H1 (cell line): ENCODE measurements at regions of chr15 and their contacts with region 1.

Region 1: GRCh38 chr15:75842722-75843551 is at the start of gene UBE2Q2:
- DNase-seq: peak in 1 of 2 experiments; percentile 89
- H3K4me3 ChIP-seq: peak within 1 kb of the TSS; percentile 75 to 95 (median 83)
- H3K27ac ChIP-seq: peak within 1 kb of the TSS; percentile 85
- H3K4me1 ChIP-seq: peaks cover 0 to 12% (median 8%) of the 10 kb centered on the region in 4 experiments
- H3K27me3 ChIP-seq: peaks cover 2 to 20% (median 9%) of the 10 kb centered on the region in 4 experiments; a peak in 6 of 7 replicates
- CTCF ChIP-seq: peak in 1 of 3 experiments; percentile 7; a peak in 1 of 4 replicates
- EP300 ChIP-seq: no peak
- POLR2A ChIP-seq: peak; percentile 67 to 79
- RAD21 ChIP-seq: no peak
- total RNA-seq, gene UBE2Q2: 22.4 and 22.7 TPM in 2 replicates

Region 2: DNA sequence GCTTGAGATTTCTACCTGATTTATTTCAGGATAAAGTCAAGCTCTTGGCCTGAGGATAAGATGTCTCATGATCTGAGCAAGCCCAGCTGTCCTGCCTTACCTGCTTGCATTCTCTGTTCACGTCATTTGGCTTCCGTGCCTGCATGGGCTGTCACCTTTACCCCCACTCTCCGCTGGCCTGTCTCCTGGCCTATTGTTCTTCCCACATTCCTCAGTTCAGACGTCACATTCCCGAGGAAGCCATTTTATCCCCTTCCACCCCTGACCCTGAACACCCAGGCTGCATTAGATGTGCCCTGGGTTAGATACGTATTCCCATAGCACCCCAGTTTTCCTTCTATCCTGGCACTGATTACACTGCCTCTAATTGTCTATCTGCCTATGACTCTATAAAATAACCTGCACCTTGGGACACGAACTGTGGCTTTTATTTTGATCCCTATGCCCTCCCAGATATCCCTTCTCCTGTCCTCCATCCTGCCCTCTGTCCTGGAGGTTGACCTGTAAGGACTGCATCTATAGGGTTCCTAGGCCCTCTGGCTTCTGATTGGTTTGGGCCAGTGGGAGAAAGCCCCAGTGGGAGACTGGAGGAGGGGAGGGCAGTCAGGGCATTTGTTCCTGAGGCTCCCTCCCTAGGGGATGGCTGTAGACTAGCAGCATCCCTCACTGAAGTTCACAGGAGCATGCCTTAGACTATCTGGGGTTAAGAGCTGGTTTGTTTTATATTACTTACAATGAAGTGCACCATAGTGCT is 18.9 kb before region 1 on chr15:
- CTCF ChIA-PET with region 1: interaction called, 8 read pairs
- POLR2A ChIA-PET with region 1: interaction called, 20 read pairs
- DNase-seq: peak in 1 of 2 experiments; percentile 69
- H3K4me3 ChIP-seq: peak overlapping the region in 1 of 4 experiments; percentile 24; a peak in 1 of 8 replicates
- H3K27ac ChIP-seq: peak overlapping the region; percentile 76
- H3K4me1 ChIP-seq: peaks cover 5 to 14% (median 7%) of the 10 kb centered on the region in 4 experiments
- H3K27me3 ChIP-seq: no peaks in the 10 kb centered on the region
- CTCF ChIP-seq: no peak
- EP300 ChIP-seq: peak in 1 of 2 experiments; percentile 55; a peak in 1 of 3 replicates
- POLR2A ChIP-seq: peak; percentile 18 to 49; a peak in 2 of 3 replicates
- RAD21 ChIP-seq: no peak; a peak in 1 of 4 replicates

Region 3: DNA sequence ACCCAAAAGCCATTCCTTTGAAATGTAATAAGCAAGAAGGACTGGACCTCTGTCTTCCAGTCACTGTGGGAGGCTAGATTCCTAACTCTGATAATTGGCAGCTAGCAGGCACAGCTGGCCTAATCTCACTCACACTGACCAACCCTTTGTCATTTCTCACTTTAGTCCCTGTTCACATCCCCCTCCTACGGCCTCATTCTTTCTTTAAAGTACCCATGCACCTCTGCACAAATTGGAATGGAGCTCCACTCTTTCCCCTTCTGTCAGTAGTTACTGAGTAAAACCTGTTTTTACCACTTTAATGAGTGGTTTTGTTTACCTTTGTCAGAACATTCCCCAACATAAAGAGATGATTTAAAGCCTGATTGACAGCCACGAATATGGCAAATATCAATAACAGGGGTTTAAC is 11.4 kb before region 1 on chr15:
- CTCF ChIA-PET with region 1: interaction called, 8 read pairs
- POLR2A ChIA-PET with region 1: interaction called, 17 read pairs
- DNase-seq: no peak
- H3K4me3 ChIP-seq: no peak overlapping the region
- H3K27ac ChIP-seq: no peak overlapping the region
- H3K4me1 ChIP-seq: peaks cover 3 to 6% (median 4%) of the 10 kb centered on the region in 4 experiments; a peak in 4 of 7 replicates
- H3K27me3 ChIP-seq: no peaks in the 10 kb centered on the region
- CTCF ChIP-seq: no peak
- EP300 ChIP-seq: no peak
- POLR2A ChIP-seq: no peak
- RAD21 ChIP-seq: no peak

Region 4: DNA sequence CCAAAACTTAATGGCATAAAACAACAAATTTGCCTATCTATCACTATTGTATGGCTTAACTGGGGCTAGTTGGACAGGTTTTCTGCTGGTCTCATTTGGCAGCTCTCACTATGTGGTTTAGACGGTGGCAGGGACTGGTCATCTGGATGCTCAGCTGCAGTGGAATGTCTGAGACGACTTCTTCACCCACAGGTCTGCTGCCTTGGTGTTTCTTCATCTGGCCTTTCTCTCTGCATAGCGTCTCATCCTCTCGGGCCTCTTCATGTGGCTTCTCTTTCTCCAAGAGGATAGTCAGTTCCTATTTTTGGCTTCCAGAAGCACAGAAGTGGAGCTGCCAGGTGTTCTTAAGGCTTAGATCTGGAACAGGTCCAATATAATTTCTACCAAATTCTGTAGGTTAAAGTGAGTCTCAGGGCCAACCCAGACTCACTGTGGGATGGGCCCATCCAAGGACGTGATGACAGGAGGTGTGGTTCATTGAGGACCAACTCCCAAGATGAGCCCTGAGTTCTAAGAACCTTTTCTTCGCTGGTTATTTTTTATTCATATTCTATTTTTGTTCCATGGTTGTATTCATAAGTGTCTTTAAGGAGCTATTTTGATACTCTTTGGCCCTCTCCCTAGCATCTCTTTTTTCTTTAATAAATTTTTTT is 18.9 kb after region 1 on chr15:
- CTCF ChIA-PET with region 1: interaction called, 3 read pairs
- POLR2A ChIA-PET with region 1: interaction called, 12 read pairs
- DNase-seq: no peak
- H3K4me3 ChIP-seq: no peak overlapping the region
- H3K27ac ChIP-seq: no peak overlapping the region
- H3K4me1 ChIP-seq: peaks cover 0 to 2% (median under 1%) of the 10 kb centered on the region in 4 experiments; a peak in 3 of 7 replicates
- H3K27me3 ChIP-seq: no peaks in the 10 kb centered on the region
- CTCF ChIP-seq: no peak
- EP300 ChIP-seq: no peak
- POLR2A ChIP-seq: no peak
- RAD21 ChIP-seq: no peak

Region 5: DNA sequence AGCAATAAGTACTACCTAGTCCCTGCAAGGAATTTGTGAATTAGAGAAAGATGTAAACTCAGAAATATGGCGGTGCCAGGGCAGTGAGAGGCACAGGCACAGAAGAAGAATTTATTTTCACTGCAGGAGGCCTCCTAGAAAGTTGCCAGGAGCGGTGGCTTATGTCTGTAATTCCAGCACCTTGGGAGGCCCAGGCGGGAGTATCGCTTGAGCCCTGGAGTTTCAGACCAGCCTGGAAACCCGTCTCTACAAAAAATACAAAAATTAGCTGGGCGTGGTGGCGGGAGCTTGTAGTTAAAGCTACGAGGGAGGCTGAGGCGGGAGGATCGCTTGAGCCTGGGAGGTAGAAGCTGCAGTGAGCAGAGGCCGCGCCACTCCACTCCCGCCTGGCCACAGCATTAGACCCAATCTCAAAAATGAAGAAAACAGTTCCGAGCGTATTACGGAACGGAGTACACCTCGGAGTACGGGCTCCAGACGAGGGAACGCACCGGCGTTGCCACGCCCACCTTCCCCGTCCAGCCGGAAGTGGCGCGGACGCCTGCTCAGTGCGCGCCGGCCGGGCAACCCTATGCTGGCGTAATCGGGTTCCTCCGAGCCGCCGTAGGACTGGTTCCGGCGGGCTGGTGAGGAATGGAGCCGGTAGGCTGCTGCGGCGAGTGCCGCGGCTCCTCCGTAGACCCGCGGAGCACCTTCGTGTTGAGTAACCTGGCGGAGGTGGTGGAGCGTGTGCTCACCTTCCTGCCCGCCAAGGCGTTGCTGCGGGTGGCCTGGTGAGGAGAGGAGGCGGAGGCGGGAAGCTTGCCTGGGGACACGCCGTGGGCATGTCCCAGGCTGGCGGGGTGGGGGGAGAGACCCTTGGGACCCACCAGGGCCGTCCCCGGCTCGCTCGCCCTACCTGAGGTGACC is 60.6 kb after region 1 on chr15 and contains the start of gene FBXO22:
- CTCF ChIA-PET with region 1: interaction called, 4 read pairs
- POLR2A ChIA-PET with region 1: interaction called, 43 read pairs
- DNase-seq: peak; percentile 71 to 93
- H3K4me3 ChIP-seq: peak within 1 kb of the TSS; percentile 86 to 93 (median 90)
- H3K27ac ChIP-seq: peak within 1 kb of the TSS; percentile 96
- H3K4me1 ChIP-seq: peaks cover 8 to 22% (median 13%) of the 10 kb centered on the region in 4 experiments; a peak in 5 of 7 replicates
- H3K27me3 ChIP-seq: no peaks in the 10 kb centered on the region
- CTCF ChIP-seq: no peak
- EP300 ChIP-seq: peak in 1 of 2 experiments; percentile 41; a peak in 1 of 3 replicates
- POLR2A ChIP-seq: peak; percentile 87 to 89
- RAD21 ChIP-seq: peak in 1 of 2 experiments; percentile 3; a peak in 2 of 4 replicates
- total RNA-seq, gene FBXO22: 66.8 and 67.3 TPM in 2 replicates